Activated CD8-positive, alpha-beta memory T cell treated with anti-CD3 and anti-CD28 coated beads, Interleukin-2, amount 10 ng/mL, durations not matched to agents 7 days and 5 days (primary cell): ENCODE measurements at regions of chr17 and their contacts with region 1.

Region 1: GRCh38 chr17:44899069-44899782 is at the start of gene EFTUD2:
- DNase-seq: peak; percentile 94
- ATAC-seq: peak; percentile 97
- H3K4me3 Mint-ChIP-seq: peak within 1 kb of the TSS; percentile 85
- H3K27ac Mint-ChIP-seq: peak within 1 kb of the TSS; percentile 99
- H3K4me1 Mint-ChIP-seq: peaks cover 29% of the 10 kb centered on the region
- H3K27me3 Mint-ChIP-seq: peaks cover 8% of the 10 kb centered on the region
- total RNA-seq, gene EFTUD2: 134 to 178 TPM

Region 2: GRCh38 chr17:44911133-44912001 is 12.1 kb after region 1 on chr17:
- CTCF ChIA-PET with region 1: interaction called, 17 read pairs
- DNase-seq: peak; percentile 71
- ATAC-seq: peak; percentile 76
- H3K4me3 Mint-ChIP-seq: no peak overlapping the region
- H3K27ac Mint-ChIP-seq: no peak overlapping the region
- H3K4me1 Mint-ChIP-seq: peaks cover 16% of the 10 kb centered on the region
- H3K27me3 Mint-ChIP-seq: peaks cover 29% of the 10 kb centered on the region

Region 3: GRCh38 chr17:44919885-44920564 is 20.8 kb after region 1 on chr17:
- CTCF ChIA-PET with region 1: interaction called, 12 read pairs
- DNase-seq: peak; percentile 80
- ATAC-seq: peak; percentile 85
- H3K4me3 Mint-ChIP-seq: no peak overlapping the region
- H3K27ac Mint-ChIP-seq: no peak overlapping the region
- H3K4me1 Mint-ChIP-seq: peaks cover 4% of the 10 kb centered on the region
- H3K27me3 Mint-ChIP-seq: peaks cover 26% of the 10 kb centered on the region